Right cardiac atrium (tissue), 5 donors: ENCODE measurements at regions of chr20 and their contacts with region 1.

Region 1: GRCh38 chr20:50987592-50988210 is 29.1 kb downstream of the MOCS3 start:
- DNase-seq: peak in 2 of 3 donors; percentile 51 to 71
- ATAC-seq: peak; percentile 90 to 92
- H3K4me3 ChIP-seq: no peak overlapping the region
- H3K27ac ChIP-seq: no peak overlapping the region
- H3K4me1 ChIP-seq: no peaks in the 10 kb centered on the region
- H3K27me3 ChIP-seq: no peaks in the 10 kb centered on the region

Region 2: GRCh38 chr20:51206032-51206662 is 218.4 kb after region 1 on chr20:
- intact Hi-C with region 1: no loop called
- DNase-seq: no peak
- ATAC-seq: no peak
- H3K4me3 ChIP-seq: no peak overlapping the region
- H3K27ac ChIP-seq: no peak overlapping the region
- H3K4me1 ChIP-seq: no peaks in the 10 kb centered on the region
- H3K27me3 ChIP-seq: no peaks in the 10 kb centered on the region

Region 3: DNA sequence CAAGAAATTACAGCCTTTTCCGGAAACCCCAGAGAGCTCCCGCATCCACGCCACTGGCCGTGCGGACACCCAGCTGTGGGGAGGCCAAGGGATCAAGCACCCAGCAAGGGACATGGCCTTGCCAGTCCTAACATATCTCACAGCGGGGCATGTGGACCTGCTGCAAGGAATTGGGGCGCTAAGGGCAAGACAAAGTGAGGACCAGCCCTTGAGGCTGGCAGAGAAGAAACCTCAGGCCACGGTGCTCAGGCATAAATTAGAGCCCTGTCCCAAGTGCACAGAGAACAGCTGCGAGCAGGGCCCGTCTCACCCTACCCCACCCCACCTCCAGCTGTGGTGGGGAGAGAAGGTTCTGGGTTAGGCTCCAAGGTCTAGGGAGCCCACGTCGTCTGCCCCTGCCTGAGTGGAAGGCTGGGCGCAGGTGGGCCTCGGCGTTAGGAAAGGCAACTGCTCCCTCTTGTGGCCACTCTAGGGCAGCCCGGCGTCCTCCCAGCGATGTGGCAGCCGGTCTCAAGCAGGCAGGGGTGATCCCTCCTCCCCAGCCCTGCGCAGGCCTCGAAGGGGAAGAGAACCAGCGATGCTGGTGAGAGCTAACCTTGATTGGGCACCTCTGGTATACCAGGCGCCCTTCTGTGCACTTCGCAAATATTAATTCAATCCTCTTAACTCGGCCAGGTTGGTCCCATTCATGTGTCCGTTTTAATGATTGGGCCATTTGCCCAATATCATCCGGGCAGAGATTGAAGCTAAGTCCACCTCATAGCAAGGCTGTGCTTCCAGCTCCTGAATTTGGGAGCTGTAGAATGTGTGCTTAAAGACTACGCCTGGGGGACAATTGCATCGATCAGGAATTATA is 319.0 kb after region 1 on chr20:
- intact Hi-C with region 1: loop called in 3 of 4 experiments (anchors 2 to 5 kb)
- DNase-seq: peak; percentile 69 to 90 (median 89)
- ATAC-seq: peak; percentile 89 to 94
- H3K4me3 ChIP-seq: no peak overlapping the region
- H3K27ac ChIP-seq: no peak overlapping the region
- H3K4me1 ChIP-seq: no peaks in the 10 kb centered on the region
- H3K27me3 ChIP-seq: no peaks in the 10 kb centered on the region

Region 4: DNA sequence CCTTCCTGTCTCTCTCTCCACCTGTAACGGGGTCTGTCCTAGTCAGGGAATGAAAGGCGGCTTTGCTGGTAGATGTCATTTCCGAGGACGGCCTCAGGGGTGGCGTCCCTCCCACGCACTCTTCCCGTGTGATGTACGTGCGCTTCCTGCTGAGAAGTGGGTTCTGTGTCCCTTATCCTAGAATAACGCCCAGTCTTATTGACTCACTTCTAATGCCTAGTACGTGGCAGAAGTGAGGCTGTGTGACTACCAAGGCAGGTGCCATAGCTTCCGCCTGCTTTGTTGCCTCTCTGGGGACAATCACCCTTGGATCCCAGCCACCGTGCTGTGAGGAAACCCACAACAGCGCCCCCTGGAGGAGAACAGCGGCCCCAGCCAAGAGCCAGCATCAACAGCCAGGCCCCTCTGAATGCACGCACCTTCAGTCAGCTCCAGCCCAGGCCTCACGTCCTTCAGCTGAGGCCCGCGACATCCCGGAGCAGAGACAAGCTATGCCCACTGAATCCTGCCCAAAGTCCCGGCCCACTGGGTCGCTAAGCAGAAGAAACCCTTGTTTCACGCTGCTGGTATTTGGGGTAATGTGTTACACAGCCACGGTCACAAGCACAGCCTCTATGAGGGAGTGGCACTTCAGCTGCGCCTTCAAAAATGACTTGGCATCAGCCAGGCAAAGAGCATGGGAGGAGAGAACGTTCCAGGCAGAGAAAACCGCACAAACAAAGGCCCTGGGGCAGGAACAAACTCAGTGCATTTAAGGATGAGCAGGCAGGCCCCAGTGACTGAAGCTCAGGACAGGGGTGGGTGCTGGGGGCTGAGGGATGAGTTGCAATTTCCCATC is 330.6 kb after region 1 on chr20:
- intact Hi-C with region 1: loop called in 1 of 4 experiments (anchors 5 kb)
- DNase-seq: peak; percentile 43 to 64 (median 60)
- ATAC-seq: peak; percentile 25 to 40
- H3K4me3 ChIP-seq: no peak overlapping the region
- H3K27ac ChIP-seq: no peak overlapping the region
- H3K4me1 ChIP-seq: peaks cover under 1% of the 10 kb centered on the region
- H3K27me3 ChIP-seq: no peaks in the 10 kb centered on the region

Region 5: DNA sequence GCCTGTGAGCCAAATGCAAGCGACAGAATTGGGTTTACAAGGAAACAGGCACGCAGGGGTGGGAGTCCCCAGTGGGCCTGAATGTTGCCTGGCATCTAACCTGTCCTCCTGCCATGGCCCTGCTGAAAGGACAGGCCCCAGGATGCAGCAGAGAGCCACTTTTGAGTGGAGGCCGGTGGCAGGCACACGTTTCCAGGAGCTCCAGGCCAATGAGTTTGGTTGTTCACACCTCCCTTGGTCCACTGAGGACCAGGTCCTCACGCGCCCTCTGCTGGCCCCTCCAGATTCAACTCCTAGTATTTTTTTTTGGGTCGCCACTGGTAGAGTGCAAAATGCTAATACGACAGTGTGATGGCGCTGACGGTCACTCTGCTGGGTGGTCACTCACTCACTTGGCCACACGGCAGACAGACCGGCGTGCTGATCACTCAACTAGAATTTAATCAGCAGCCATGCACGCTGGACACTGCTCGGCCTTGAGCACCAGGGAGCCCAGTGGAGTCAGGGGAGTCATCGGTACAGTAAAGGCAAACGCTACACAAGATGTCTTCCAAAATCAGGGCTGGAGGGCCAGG is 636.5 kb after region 1 on chr20:
- intact Hi-C with region 1: loop called in 2 of 4 experiments (anchors 10 kb)
- DNase-seq: peak; percentile 58 to 83 (median 81)
- ATAC-seq: peak in 1 of 2 donors; percentile 43
- H3K4me3 ChIP-seq: no peak overlapping the region
- H3K27ac ChIP-seq: no peak overlapping the region
- H3K4me1 ChIP-seq: peaks cover 3% of the 10 kb centered on the region
- H3K27me3 ChIP-seq: no peaks in the 10 kb centered on the region